Caco-2 (cell line): ENCODE measurements at regions of chr1 and their contacts with region 1.

Region 1: GRCh38 chr1:207997486-207998268 is 86.8 kb upstream of the CD34 start:
- DNase-seq: peak; percentile 63 to 70
- H3K4me3 ChIP-seq: no peak overlapping the region
- H3K4me3 Mint-ChIP-seq: no peak overlapping the region
- H3K27ac Mint-ChIP-seq: no peak overlapping the region
- H3K4me1 ChIP-seq: no peaks in the 10 kb centered on the region
- H3K4me1 Mint-ChIP-seq: no peaks in the 10 kb centered on the region
- H3K27me3 ChIP-seq: no peaks in the 10 kb centered on the region; the same call in 1 of the 2 replicates
- H3K27me3 Mint-ChIP-seq: peaks cover 17% of the 10 kb centered on the region
- CTCF ChIP-seq: peak; percentile 84 to 91

Region 2: DNA sequence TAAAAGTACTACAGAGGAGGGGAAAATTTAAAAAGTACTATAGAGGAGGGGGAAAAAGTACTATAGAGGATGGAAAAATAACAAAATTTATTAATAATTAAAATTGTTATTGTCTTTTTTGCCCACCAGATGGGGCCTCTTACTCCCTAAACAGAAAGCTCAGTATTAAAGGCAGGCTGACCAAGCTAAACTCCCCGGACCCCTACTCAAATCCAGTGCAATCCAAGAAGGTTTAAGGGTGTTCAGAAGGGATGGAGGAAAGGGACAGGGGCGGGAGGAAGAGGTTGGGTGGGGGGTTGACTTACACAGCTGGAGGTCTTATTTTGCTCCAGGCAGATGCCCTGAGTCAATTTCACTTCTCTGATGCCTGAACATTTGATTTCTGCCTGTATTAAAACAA is 100.5 kb before region 1 on chr1:
- CTCF ChIA-PET with region 1: interaction called, 14 read pairs
- POLR2A ChIA-PET with region 1: no interaction called
- intact Hi-C with region 1: no loop called
- DNase-seq: no peak
- H3K4me3 ChIP-seq: no peak overlapping the region
- H3K4me3 Mint-ChIP-seq: no peak overlapping the region
- H3K27ac Mint-ChIP-seq: no peak overlapping the region
- H3K4me1 ChIP-seq: no peaks in the 10 kb centered on the region
- H3K4me1 Mint-ChIP-seq: no peaks in the 10 kb centered on the region
- H3K27me3 ChIP-seq: no peaks in the 10 kb centered on the region
- H3K27me3 Mint-ChIP-seq: no peaks in the 10 kb centered on the region
- CTCF ChIP-seq: peak; percentile 23 to 47

Region 3: GRCh38 chr1:208036109-208036808 is 38.6 kb after region 1 on chr1:
- CTCF ChIA-PET with region 1: no interaction called
- POLR2A ChIA-PET with region 1: no interaction called
- intact Hi-C with region 1: no loop called
- DNase-seq: peak in 1 of 2 experiments; percentile 34
- H3K4me3 ChIP-seq: no peak overlapping the region
- H3K4me3 Mint-ChIP-seq: no peak overlapping the region
- H3K27ac Mint-ChIP-seq: no peak overlapping the region
- H3K4me1 ChIP-seq: no peaks in the 10 kb centered on the region
- H3K4me1 Mint-ChIP-seq: no peaks in the 10 kb centered on the region
- H3K27me3 ChIP-seq: no peaks in the 10 kb centered on the region
- H3K27me3 Mint-ChIP-seq: peaks cover 5% of the 10 kb centered on the region
- CTCF ChIP-seq: peak in 1 of 2 experiments; percentile 49

Region 4: GRCh38 chr1:208047476-208047934 is 49.8 kb after region 1 on chr1:
- CTCF ChIA-PET with region 1: no interaction called
- POLR2A ChIA-PET with region 1: no interaction called
- intact Hi-C with region 1: no loop called
- DNase-seq: no peak
- H3K4me3 ChIP-seq: no peak overlapping the region
- H3K4me3 Mint-ChIP-seq: no peak overlapping the region
- H3K27ac Mint-ChIP-seq: no peak overlapping the region
- H3K4me1 ChIP-seq: peaks cover 12% of the 10 kb centered on the region; the same call in 1 of the 2 replicates
- H3K4me1 Mint-ChIP-seq: peaks cover 19% of the 10 kb centered on the region
- H3K27me3 ChIP-seq: no peaks in the 10 kb centered on the region
- H3K27me3 Mint-ChIP-seq: peaks cover 4% of the 10 kb centered on the region
- CTCF ChIP-seq: no peak